Dorsolateral prefrontal cortex (tissue), 120 donors: ENCODE measurements at regions of chr18 and their contacts with region 1.

Region 1: GRCh38 chr18:33231474-33232317 is 208.8 kb downstream of the CCDC178 start:
- DNase-seq: peak in 9 of 10 donors; percentile 29 to 81 (median 64)
- H3K4me3 ChIP-seq: peak overlapping the region in 1 of 59 donors; percentile 19
- H3K27ac ChIP-seq: peak overlapping the region in 17 of 59 donors; percentile 5 to 57 (median 31)
- H3K27me3 ChIP-seq: no peaks in the 10 kb centered on the region
- CTCF ChIP-seq: peak; percentile 66 to 98 (median 92)

Region 2: DNA sequence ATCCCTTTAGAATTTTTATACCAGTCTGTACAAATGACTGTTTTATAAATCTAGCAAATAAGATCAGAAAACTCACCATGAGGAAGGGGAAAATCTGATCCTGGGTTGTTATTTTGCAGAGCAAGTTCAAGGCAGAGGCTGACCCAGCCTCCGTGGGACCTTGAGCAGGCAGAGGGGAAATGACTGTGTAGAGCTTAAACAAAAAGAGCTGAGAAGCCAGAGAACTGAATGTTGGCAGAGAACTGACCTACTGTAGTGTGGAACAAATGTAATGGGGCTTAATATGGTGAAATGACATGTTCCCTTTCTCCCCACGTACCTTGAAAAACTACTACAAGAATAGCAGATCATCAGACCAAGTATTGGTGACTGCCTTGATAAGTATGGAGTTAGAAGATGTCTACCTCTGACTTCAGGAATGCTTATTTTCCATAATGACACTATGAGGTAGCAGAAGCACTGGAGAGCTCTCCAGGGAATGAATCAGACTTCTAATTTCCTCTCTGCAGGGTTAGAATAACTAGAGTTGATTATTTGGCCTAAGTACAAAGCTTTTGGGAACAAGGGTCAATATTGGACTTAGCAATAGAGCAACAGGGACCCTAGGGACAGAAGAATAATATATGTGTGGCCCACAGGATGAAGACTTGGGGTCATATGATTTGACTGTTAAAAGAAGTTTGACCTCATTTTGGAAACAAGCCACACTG is 95.6 kb before region 1 on chr18:
- intact Hi-C with region 1: no loop called
- DNase-seq: no peak
- H3K4me3 ChIP-seq: no peak overlapping the region
- H3K27ac ChIP-seq: no peak overlapping the region
- H3K27me3 ChIP-seq: no peaks in the 10 kb centered on the region
- CTCF ChIP-seq: no peak

Region 3: GRCh38 chr18:33755931-33756560 is 524.4 kb after region 1 on chr18:
- intact Hi-C with region 1: loop called (anchors 5 kb)
- DNase-seq: peak in 7 of 10 donors; percentile 44 to 86 (median 46)
- H3K4me3 ChIP-seq: no peak overlapping the region
- H3K27ac ChIP-seq: no peak overlapping the region
- H3K27me3 ChIP-seq: no peaks in the 10 kb centered on the region
- CTCF ChIP-seq: no peak